CD4-positive, alpha-beta T cell (primary cell): ENCODE measurements at regions of chr14 and their contacts with region 1.

Region 1: GRCh38 chr14:24093901-24094761 is at the start of gene PCK2:
- DNase-seq: peak; percentile 53 to 82 (median 67)
- ATAC-seq: peak; percentile 77
- H3K4me3 ChIP-seq: peak within 1 kb of the TSS; percentile 97
- H3K4me3 Mint-ChIP-seq: peak within 1 kb of the TSS; percentile 97
- H3K27ac ChIP-seq: peak within 1 kb of the TSS; percentile 71 to 78
- H3K27ac Mint-ChIP-seq: peak within 1 kb of the TSS; percentile 90
- H3K4me1 ChIP-seq: peaks cover 29% of the 10 kb centered on the region
- H3K4me1 Mint-ChIP-seq: peaks cover 37% of the 10 kb centered on the region
- H3K27me3 ChIP-seq: no peaks in the 10 kb centered on the region
- H3K27me3 Mint-ChIP-seq: no peaks in the 10 kb centered on the region
- CTCF ChIP-seq: no peak
- total RNA-seq, gene PCK2: 5.2 to 7.4 TPM

Region 2: GRCh38 chr14:23929822-23930294 is 164.3 kb before region 1 on chr14:
- CTCF ChIA-PET with region 1: no interaction called
- POLR2A ChIA-PET with region 1: no interaction called
- intact Hi-C with region 1: no loop called
- DNase-seq: peak; percentile 65 to 92 (median 84)
- ATAC-seq: peak; percentile 93
- H3K4me3 ChIP-seq: no peak overlapping the region
- H3K4me3 Mint-ChIP-seq: no peak overlapping the region
- H3K27ac ChIP-seq: no peak overlapping the region
- H3K27ac Mint-ChIP-seq: no peak overlapping the region
- H3K4me1 ChIP-seq: peaks cover 4% of the 10 kb centered on the region
- H3K4me1 Mint-ChIP-seq: no peaks in the 10 kb centered on the region
- H3K27me3 ChIP-seq: peaks cover 0 to 6% of the 10 kb centered on the region in 2 experiments
- H3K27me3 Mint-ChIP-seq: peaks cover 6% of the 10 kb centered on the region
- CTCF ChIP-seq: peak; percentile 95

Region 3: DNA sequence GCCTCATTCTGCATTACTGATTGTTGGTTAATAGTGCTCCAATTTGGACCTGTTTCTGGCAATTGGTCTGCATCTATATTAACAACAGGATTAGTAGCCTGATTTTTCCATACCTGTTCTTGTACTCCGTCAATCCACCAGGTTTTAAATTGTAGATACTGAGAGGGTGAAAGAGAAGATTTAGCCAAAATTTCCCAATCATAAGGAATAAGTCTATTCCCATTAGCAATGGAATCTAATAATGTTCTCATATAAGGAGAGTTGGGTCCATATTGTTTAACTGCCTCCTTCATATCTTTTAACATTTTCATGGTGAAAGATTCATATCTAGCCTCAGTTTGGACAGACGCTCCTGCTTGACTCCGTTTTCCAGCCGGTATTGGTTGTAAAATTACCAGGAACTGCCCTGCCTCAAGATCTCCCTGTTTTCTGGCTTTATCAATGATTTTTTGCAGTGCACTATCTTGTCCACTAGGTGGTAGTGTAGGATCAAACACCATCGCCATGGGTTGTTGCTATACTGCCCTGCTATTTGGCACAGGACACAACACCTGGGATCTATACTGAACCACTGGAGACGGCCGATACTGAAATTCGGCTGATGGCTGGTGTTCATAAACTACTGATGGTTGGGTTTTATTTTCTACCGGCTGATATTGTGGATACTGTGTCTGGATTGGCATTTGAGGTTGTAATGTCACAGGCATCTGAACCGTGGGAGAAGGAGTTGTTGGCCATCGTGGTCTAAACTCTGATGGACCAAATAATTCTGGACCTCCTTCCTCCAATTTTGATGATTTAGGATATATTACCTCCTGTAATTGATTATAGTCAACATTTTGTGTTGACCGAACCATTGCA is 80.2 kb before region 1 on chr14:
- CTCF ChIA-PET with region 1: interaction called, 9 read pairs
- POLR2A ChIA-PET with region 1: interaction called, 9 read pairs
- intact Hi-C with region 1: loop called (anchors 1 kb)
- DNase-seq: peak in 12 of 14 experiments; percentile 9 to 85 (median 32)
- ATAC-seq: peak; percentile 98
- H3K4me3 ChIP-seq: no peak overlapping the region
- H3K4me3 Mint-ChIP-seq: no peak overlapping the region
- H3K27ac ChIP-seq: no peak overlapping the region
- H3K27ac Mint-ChIP-seq: no peak overlapping the region
- H3K4me1 ChIP-seq: peaks cover 11% of the 10 kb centered on the region
- H3K4me1 Mint-ChIP-seq: peaks cover 25% of the 10 kb centered on the region
- H3K27me3 ChIP-seq: no peaks in the 10 kb centered on the region
- H3K27me3 Mint-ChIP-seq: no peaks in the 10 kb centered on the region
- CTCF ChIP-seq: peak; percentile 92

Region 4: DNA sequence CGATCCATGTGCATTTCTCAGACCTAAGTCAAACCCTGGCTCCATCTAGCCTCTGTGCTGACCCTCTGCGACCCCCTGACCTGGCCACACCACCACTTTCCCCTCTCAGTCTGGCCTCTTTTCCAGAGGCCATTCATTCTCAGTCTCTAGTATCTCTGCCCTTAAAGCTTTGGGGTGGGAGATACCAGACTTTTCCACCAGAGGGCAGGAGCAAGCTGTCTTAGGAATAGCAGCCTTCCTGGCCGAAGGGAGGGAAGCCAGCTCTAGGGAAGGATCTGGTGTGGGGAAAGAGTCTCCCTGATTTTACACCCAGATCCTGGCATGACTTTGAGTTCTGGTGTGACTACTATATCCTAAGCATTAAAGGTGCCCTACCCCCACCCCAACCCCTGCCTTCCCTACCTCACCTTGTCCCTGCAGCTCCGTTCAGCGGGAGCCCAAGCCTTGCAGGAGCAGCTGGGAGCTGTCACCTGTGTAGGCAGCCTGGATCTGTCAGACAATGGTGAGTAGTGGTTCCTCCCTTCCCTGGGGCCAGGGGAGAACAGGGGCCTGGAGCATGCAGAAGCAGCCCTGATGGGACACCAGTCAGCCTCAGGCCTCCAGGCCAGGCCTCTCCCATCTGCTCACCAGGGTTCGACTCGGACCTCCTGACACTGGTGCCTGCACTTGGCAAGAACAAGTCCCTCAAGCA is 35.7 kb before region 1 on chr14:
- CTCF ChIA-PET with region 1: interaction called, 3 read pairs
- POLR2A ChIA-PET with region 1: interaction called, 17 read pairs
- intact Hi-C with region 1: loop called (anchors 1 kb)
- DNase-seq: peak in 6 of 14 experiments; percentile 30 to 82 (median 48)
- ATAC-seq: peak; percentile 83
- H3K4me3 ChIP-seq: no peak overlapping the region
- H3K4me3 Mint-ChIP-seq: no peak overlapping the region
- H3K27ac ChIP-seq: no peak overlapping the region
- H3K27ac Mint-ChIP-seq: no peak overlapping the region
- H3K4me1 ChIP-seq: peaks cover 2% of the 10 kb centered on the region
- H3K4me1 Mint-ChIP-seq: no peaks in the 10 kb centered on the region
- H3K27me3 ChIP-seq: peaks cover 0 to 10% of the 10 kb centered on the region in 2 experiments
- H3K27me3 Mint-ChIP-seq: peaks cover 10% of the 10 kb centered on the region
- CTCF ChIP-seq: peak; percentile 70

Region 5: DNA sequence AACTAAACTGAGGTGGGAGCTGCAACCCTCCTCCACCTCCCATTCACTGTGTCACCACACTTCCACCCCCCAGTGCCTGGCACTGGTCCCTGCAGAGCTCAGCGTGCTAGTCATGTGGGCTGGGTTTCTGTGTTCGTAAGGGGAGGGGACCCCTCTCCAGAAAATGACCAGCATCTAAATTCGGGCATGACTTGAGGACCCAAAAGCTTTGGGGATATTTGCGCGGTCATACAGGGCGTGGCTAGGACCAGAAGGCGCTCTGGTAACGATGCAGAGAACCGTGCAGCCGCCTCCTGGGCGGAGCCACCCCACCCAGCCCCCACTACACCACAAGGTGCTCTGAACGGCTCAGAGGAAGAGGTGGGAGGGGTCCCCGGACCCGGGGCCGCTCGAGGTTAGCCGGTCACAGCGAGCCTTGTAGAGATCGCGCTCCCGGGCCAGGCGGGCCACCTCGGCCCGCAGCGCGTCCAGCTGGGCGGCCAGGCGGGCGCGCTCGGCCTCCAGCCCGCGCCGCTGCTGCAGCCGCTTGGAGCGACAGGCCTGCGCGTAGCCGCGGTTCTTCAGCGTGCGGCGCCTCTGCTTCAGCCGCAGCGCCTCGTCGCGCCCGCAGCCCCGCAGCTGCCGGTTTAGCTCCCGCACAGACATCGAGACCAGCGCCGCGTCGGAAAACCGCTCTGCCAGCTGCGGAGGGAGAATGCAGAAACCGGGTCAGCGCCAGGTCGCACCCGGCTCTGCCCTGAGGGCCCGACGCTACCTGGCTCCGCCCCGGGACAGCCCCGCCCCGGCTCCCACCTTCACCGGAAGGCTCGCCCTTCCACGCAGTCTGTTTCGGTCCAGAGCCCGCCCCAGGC is 13.0 kb before region 1 on chr14:
- CTCF ChIA-PET with region 1: interaction called, 21 read pairs
- POLR2A ChIA-PET with region 1: interaction called, 89 read pairs
- intact Hi-C with region 1: no loop called
- DNase-seq: peak; percentile 47 to 82 (median 68)
- ATAC-seq: peak; percentile 90
- H3K4me3 ChIP-seq: peak overlapping the region; percentile 56
- H3K4me3 Mint-ChIP-seq: peak overlapping the region; percentile 93
- H3K27ac ChIP-seq: peak overlapping the region; percentile 2 to 52
- H3K27ac Mint-ChIP-seq: peak overlapping the region; percentile 90
- H3K4me1 ChIP-seq: peaks cover 21% of the 10 kb centered on the region
- H3K4me1 Mint-ChIP-seq: peaks cover 24% of the 10 kb centered on the region
- H3K27me3 ChIP-seq: no peaks in the 10 kb centered on the region
- H3K27me3 Mint-ChIP-seq: no peaks in the 10 kb centered on the region
- CTCF ChIP-seq: no peak

Region 6: GRCh38 chr14:24135834-24136542 is 41.9 kb after region 1 on chr14 and contains the start of gene PSME1:
- CTCF ChIA-PET with region 1: interaction called, 9 read pairs
- POLR2A ChIA-PET with region 1: interaction called, 15 read pairs
- intact Hi-C with region 1: no loop called
- DNase-seq: peak; percentile 89 to 97 (median 95)
- ATAC-seq: peak; percentile 97
- H3K4me3 ChIP-seq: peak within 1 kb of the TSS; percentile 74
- H3K4me3 Mint-ChIP-seq: peak within 1 kb of the TSS; percentile 94
- H3K27ac ChIP-seq: peak within 1 kb of the TSS; percentile 72 to 88
- H3K27ac Mint-ChIP-seq: peak within 1 kb of the TSS; percentile 85
- H3K4me1 ChIP-seq: peaks cover 68% of the 10 kb centered on the region
- H3K4me1 Mint-ChIP-seq: peaks cover 70% of the 10 kb centered on the region
- H3K27me3 ChIP-seq: no peaks in the 10 kb centered on the region
- H3K27me3 Mint-ChIP-seq: no peaks in the 10 kb centered on the region
- CTCF ChIP-seq: no peak
- total RNA-seq, gene PSME1: 166 to 171 TPM

Region 7: DNA sequence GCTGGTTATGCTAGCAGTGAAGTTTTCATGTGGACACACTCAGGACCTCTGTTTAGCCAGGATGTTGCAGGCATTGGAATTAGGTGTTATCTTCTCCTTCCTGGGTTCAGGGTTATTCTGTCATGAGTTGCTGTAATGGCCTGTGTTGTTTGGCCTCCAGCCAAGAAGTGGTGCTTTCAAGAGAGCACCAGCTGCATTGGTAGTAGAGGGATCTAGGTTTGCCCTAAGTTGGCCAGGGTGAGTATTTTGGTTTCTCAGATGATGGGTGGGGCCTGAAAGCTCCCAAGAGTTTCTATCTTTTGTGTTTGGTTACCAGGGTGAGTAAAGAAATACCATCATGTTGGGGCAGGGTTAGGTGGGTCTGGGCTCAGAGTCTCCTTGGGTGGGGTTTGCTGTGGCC is 518.1 kb after region 1 on chr14:
- CTCF ChIA-PET with region 1: no interaction called
- POLR2A ChIA-PET with region 1: no interaction called
- intact Hi-C with region 1: no loop called
- DNase-seq: peak in 1 of 14 experiments; percentile 31
- ATAC-seq: no peak
- H3K4me3 ChIP-seq: no peak overlapping the region
- H3K4me3 Mint-ChIP-seq: no peak overlapping the region
- H3K27ac ChIP-seq: no peak overlapping the region
- H3K27ac Mint-ChIP-seq: no peak overlapping the region
- H3K4me1 ChIP-seq: peaks cover 9% of the 10 kb centered on the region
- H3K4me1 Mint-ChIP-seq: no peaks in the 10 kb centered on the region
- H3K27me3 ChIP-seq: no peaks in the 10 kb centered on the region
- H3K27me3 Mint-ChIP-seq: no peaks in the 10 kb centered on the region
- CTCF ChIP-seq: no peak